ENCODE measurements at regions of chr10 and their contacts with region 1.

Region 1: DNA sequence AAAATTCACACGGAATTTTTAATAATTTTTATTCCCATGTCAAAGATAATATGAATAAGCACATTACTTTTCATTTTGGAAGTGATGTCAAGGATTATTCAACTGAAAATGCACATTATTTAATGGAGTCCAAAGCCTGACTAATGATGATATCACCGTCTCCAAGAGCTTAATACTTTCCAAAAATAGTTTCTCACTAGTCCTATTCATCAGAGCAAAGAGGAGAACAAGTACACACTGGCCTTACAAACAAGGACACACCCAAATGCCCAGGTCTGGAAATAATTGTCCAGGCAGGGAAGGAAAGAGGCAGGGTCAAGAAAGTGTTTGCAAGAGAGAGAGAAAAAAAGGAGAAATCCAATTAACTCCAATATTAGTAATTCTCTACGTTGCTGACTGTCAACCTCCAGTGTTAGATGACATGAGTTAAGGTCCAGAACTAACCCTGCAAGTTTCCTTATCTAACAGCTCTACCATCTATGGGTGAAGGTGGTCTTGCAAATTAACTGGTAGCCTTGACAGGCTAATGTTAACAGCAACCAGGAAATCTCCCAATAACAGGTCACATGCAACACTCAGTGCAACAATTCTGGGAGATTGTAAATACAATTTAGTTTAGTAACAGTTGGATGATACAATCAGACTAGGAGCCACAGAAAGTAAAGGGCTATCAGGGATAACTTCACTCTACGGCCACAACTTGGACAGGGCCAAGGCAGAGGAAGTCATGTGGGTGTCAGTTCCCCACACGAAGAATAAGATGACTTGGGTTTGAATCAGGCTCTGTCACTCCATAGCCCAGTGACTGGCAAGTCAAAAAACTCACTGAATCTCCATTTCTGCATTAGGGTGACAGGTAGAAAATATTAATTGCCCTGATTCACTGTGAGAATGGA is 217.1 kb upstream of the CCDC6 start:
- DNase-seq: no peak
- ATAC-seq: peak; percentile 83

Region 2: GRCh38 chr10:60186315-60187071 is 63.1 kb after region 1 on chr10:
- intact Hi-C with region 1: loop called (anchors 5 kb)
- DNase-seq: peak; percentile 75
- ATAC-seq: peak; percentile 88

Region 3: DNA sequence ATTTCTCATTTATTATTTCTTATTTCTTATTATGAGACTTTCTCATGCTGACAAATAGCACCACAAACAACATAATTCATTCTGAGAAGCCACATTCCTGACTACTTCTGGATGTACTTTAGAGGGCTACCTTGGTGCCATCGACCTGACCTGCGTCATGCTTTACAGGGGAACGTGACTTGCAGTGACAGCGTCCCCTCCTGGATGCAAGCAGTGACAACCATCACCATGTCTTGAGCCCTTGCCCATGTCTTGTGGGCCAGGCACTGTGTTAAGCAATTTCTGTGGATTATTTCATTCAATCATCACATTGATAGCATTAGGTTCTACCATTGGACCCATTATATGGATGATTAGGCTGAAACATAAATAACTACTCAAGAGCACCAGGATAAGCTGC is 129.3 kb after region 1 on chr10:
- intact Hi-C with region 1: no loop called
- DNase-seq: no peak
- ATAC-seq: no peak

Region 4: DNA sequence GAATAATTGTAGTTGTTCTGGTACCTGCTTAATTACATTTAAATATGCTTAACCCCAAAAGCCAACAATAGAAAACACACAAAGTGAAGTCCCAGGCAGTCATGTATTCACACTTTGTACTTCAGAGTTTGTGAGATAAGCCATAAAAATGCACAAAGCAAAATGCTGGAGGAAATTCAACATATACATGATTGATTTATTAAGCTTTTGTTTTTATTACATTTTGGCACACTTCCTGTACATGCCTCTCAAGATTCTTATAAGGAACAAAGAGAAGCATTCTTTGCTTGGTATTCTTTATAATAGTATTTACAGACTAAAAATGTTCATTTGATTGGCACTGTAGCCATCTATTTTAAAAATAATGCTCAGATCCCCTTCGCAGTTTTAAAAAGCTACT is 373.9 kb after region 1 on chr10:
- intact Hi-C with region 1: no loop called
- DNase-seq: no peak
- ATAC-seq: no peak